ENCODE measurements at regions of chr11 and their contacts with region 1.

Region 1: GRCh38 chr11:95299078-95299679 is 68.2 kb upstream of the SESN3 start:
- DNase-seq: no peak
- ATAC-seq: peak; percentile 42; the same call in 1 of the 2 replicates
- H3K4me3 Mint-ChIP-seq: no peak overlapping the region
- H3K27ac Mint-ChIP-seq: peak overlapping the region; percentile 58; the same call in 1 of the 2 replicates
- H3K4me1 Mint-ChIP-seq: peaks cover 66% of the 10 kb centered on the region
- H3K27me3 Mint-ChIP-seq: no peaks in the 10 kb centered on the region; the same call in 1 of the 2 replicates
- CTCF ChIP-seq: no peak

Region 2: DNA sequence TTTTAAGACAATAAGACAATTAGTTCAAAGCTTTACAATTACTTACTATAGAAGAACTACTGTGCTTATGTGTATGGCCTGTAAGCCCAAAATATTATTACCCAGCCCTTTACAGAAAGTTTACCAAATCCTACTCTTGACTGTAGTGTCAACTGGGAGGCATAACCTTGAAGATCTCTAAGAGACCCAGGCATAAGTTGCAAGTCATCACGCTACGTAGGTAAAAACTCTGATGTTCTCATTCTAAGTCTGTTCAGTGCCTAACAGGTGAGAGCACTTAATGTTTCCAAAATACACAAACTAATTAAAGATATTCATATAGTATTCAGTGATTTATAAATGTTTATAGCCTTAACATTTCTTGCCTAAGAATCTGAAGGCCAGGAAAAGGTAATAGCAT is 81.0 kb before region 1 on chr11:
- CTCF ChIA-PET with region 1: no interaction called
- POLR2A ChIA-PET with region 1: interaction called, 11 read pairs
- DNase-seq: no peak
- ATAC-seq: no peak
- H3K4me3 Mint-ChIP-seq: no peak overlapping the region
- H3K27ac Mint-ChIP-seq: no peak overlapping the region
- H3K4me1 Mint-ChIP-seq: peaks cover 4% of the 10 kb centered on the region
- H3K27me3 Mint-ChIP-seq: no peaks in the 10 kb centered on the region
- CTCF ChIP-seq: no peak